Ovary (tissue), 10 donors: ENCODE measurements at regions of chr17 and their contacts with region 1.

Region 1: DNA sequence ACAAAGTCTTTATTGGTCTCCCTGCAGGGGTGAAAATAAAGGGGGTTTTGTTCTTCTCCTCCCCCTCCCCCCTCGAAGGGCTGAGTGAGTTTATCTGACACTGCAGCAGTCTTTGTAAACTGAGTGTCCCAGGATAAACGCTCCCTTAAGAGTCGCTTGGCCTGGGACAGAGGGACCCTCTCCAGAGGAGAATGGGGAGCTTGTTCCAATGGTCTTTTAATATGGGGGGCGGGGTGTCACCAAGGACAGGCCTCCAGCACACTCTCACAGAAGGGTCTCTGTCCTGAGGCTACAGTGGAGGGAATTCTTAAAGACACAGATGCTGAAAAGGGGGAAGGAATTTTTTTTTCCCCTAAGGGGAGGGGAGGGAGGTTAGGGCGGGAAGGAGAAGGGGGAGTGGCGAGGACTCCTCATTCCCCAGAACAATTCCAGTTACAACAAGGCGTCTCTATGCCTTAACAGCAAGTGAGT is 455.5 kb downstream of the SOX9 start:
- DNase-seq: no peak
- H3K4me3 ChIP-seq: no peak overlapping the region
- H3K27ac ChIP-seq: no peak overlapping the region
- H3K4me1 ChIP-seq: no peaks in the 10 kb centered on the region
- H3K27me3 ChIP-seq: no peaks in the 10 kb centered on the region
- CTCF ChIP-seq: no peak
- EP300 ChIP-seq: no peak
- POLR2A ChIP-seq: no peak

Region 2: GRCh38 chr17:72510397-72511016 is 65.8 kb before region 1 on chr17:
- intact Hi-C with region 1: loop called in 1 of 4 experiments (anchors 10 kb)
- DNase-seq: no peak
- H3K4me3 ChIP-seq: no peak overlapping the region
- H3K27ac ChIP-seq: no peak overlapping the region
- H3K4me1 ChIP-seq: peaks cover 1% of the 10 kb centered on the region
- H3K27me3 ChIP-seq: no peaks in the 10 kb centered on the region
- CTCF ChIP-seq: no peak
- EP300 ChIP-seq: no peak
- POLR2A ChIP-seq: no peak